Posterior vena cava (tissue), 2 donors: ENCODE measurements at regions of chr18 and their contacts with region 1.

Region 1: DNA sequence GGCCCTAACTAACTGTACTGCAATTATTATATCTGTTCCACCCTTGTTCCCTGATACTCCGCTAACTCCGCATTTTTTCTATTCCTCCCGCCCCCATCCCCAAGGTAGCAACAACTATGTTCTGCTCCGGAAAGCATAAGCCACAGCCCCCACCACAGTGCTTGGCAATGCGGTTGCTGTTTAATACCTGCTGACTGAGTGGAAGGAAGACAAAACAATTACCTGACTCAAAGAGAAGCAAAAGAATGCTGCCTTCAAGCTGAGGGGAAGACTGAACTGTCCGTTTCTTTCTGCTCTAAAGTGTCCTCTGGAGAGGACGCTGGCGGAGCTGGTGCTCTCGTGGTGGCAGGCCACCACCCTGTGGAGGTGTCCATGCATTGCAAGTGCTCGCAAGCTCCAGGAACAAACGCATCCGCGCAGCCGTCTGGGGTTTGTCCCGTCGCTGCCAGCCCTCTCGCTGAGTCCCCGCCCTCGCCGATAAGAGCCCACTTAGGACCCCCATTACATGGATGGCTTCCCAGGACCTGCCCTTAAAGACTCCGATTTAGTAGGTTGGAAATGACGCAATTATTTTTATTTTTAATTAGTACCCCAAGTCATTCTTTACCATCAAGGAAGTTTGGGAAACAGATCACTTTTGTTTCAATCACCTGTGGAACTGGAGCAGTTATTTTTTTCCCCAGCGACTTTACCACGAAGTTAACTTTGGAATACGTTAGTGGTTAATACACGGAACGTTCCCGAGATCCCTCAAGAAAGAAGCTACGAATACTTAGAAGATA is 1.6 kb upstream of the MYL12A start:
- DNase-seq: peak; percentile 97

Region 2: GRCh38 chr18:2655178-2655953 is 590.7 kb before region 1 on chr18 and contains the start of gene SMCHD1:
- intact Hi-C with region 1: loop called in 1 of 2 experiments (anchors 5 kb)
- DNase-seq: peak; percentile 96
- total RNA-seq, gene SMCHD1: 50.8 to 54.2 TPM

Region 3: GRCh38 chr18:2958819-2959298 is 287.2 kb before region 1 on chr18:
- intact Hi-C with region 1: loop called in 1 of 2 experiments (anchors 10 kb)
- DNase-seq: no peak

Region 4: DNA sequence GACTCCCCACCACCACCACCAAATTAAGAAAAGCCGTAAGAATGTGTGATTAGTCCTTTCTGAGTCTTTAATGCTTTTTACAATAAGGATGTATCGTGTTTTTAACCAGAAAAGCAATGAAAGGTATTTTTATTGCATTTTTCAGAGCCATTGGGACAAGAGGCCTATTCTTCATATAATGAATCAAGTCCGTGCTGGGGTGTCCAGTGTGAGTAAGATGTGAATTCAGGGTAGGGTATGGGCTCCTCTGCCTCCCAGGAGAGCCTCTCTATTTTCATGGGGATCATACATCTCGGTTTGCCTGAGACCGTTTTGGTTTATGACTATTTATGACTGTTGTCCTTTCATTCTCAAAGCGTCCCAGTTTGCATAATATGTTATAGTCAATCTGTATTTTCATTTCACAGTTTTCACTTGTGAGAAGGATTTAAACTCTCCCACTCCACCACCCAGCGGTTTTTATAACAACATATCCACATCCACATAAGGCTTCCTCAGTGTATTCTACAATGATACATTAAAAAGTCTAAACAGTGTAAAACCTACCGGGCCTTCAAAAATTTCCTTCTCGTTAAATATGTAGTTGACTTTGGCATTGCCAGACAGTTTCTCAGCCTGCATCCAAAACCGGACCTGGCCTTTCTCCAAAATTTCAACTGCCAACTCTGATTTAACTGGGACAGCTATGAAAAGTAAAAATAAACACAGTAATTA is 152.3 kb before region 1 on chr18:
- intact Hi-C with region 1: no loop called
- DNase-seq: no peak

Region 5: DNA sequence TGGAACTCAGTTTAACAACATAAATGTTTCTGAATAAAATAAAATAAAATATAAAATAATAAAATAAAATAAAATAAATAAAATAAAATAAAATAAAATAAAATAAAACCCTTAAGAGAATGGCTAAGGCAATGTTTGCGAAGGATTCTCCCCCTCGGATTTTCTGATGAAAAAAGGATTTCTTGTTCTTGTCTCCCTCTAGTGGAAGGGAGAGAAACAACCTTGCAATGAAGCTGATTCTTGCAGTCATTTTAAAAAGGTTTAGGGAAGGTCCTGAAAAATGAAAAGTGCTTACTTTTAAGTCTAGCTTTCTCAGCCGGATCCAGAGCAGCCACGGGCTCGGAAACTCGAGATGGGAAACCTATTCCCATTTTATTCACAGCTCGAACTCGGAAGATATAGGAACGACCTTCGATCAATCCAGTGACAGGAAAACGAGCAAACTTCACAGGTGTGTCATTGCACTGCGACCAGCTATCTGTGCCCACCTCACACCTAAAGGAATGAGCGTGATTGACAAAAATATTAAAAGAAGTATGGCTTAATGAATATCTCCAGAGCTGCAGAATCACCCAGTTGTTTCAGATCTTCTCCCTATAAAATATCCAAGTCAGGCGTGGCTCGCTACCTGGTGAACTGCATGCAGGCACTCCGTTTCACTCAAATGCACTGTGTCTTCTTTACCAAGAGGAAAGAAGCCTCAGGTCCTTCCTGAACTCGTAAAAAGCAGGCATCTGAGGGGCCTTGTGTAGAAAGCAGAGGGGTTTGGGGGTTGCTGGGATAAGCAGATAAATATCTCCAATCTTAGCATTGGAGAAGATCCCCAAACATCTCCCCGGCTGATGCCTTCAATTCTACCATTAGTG is 94.4 kb before region 1 on chr18:
- intact Hi-C with region 1: loop called in 1 of 2 experiments (anchors 10 kb)
- DNase-seq: no peak

Region 6: DNA sequence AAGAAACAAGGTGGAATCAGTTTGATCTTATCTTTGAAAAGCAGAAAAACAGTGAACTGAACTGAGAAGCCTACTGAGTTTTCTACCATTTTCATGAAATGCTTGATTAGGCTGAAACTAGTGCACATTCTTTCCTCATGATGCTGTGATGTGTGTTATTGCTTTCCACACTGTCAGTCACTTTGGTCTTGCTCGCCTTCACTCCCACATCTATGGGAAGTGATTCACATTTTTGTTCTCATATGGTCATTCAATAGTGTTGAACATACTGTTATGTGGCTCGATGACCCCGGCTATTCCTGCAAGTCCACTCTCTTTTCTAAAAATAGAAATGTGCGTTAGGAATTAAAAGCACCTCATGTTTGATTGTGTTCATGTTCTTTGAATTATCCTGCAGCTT is 333.7 kb after region 1 on chr18:
- intact Hi-C with region 1: no loop called
- DNase-seq: no peak